ENCODE measurements at regions of chr18 and their contacts with region 1.

Region 1: DNA sequence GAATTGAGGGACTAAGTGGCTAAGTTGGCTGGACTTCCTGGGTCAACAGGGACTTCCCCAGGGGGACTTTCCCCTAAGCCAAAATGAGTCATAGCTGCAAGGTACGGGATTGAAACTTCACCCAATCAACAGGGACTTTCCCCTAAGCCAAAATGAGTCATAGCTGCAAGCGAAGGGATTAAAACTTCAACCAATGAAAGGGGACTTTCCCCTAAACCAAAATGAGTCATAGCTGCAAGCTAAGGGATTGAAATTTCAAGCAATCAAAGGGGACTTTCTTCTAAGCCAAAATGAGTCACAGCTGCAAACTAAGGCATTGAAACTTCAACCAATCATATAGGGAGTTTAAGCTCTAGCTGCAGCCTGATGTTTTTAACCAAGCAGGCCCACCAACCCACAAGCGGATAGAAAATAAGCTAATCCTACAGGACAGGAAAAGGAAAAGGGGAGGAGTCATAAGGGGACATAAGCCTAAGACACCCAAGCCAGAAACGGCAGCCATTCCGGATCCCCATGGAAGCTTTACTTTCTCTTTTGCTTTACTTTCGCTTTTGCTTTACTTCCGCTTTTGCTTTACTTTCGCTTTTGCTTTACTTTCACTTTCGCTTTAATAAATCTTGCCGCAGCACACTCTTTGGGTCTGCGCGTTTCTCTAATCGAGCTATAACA is 1375.4 kb upstream of the CELF4 start:
- DNase-seq: peak; percentile 69
- H3K4me3 Mint-ChIP-seq: peak overlapping the region; percentile 41
- H3K27ac Mint-ChIP-seq: peak overlapping the region; percentile 97
- H3K4me1 Mint-ChIP-seq: peaks cover 38% of the 10 kb centered on the region
- H3K27me3 Mint-ChIP-seq: no peaks in the 10 kb centered on the region

Region 2: DNA sequence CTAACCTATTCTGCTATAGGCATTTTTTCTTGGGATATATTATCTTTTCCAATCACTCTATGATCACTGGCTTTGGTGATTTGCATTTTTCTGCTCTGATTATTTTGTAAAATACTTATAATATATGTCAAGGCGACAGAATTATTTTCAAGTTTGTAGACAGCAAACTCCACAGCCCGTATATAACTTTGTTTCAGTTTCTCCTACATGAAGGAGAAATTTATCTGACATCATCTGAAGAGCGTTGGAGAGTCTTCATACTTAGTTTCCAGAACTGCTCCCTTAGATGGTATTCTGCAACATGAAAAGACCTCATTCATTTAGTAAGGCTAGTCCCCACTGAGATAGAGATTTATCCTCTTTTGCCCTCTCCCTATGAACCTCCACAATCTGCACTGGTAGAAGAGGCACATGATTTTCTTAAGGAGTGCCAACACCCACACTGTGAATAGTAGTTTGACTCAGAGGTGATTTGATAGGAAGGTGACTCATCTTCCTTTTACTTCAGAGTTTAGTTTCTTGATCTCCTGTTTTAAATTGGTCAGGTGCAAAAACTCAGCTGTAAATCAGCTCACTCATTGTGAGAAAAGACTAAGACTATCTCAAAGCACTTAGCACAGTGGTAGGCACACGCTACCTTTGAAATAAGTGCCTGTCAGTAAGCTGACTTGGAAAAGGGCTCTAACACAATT is 473.2 kb after region 1 on chr18:
- CTCF ChIA-PET with region 1: no interaction called
- intact Hi-C with region 1: loop called (anchors 2 kb)
- DNase-seq: peak; percentile 11
- H3K4me3 Mint-ChIP-seq: no peak overlapping the region
- H3K27ac Mint-ChIP-seq: no peak overlapping the region
- H3K4me1 Mint-ChIP-seq: peaks cover 5% of the 10 kb centered on the region
- H3K27me3 Mint-ChIP-seq: no peaks in the 10 kb centered on the region